CD4-positive, alpha-beta memory T cell (primary cell): ENCODE measurements at regions of chr4 and their contacts with region 1.

Region 1: DNA sequence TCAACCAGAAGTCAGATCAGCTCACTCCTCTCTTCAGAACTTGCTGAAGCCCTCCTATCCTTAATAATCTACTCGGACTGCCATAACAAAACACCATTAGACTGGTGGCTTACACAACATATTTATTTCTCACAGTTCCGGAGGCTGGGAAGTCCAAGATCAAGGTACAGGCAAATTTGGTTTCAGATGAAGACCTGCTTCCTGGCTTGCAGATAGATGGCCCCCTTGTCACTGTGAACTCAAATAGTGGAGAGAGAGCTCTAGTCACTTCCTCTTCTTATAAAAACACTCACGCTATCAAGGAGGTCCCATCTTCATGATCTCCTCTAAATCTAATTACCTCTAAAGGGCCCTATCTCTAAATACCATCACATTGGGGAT is 125.1 kb downstream of the CAMK2D start:
- DNase-seq: peak; percentile 35 to 48 (median 42)
- H3K4me3 ChIP-seq: no peak overlapping the region
- H3K4me3 Mint-ChIP-seq: peak overlapping the region in 7 of 8 donors; percentile 53 to 82 (median 61)
- H3K27ac ChIP-seq: peak overlapping the region; percentile 29
- H3K27ac Mint-ChIP-seq: peak overlapping the region; percentile 65 to 85 (median 83)
- H3K4me1 ChIP-seq: peaks cover 48% of the 10 kb centered on the region
- H3K4me1 Mint-ChIP-seq: peaks cover 42 to 61% (median 48%) of the 10 kb centered on the region in 4 donors
- H3K27me3 ChIP-seq: no peaks in the 10 kb centered on the region
- H3K27me3 Mint-ChIP-seq: no peaks in the 10 kb centered on the region

Region 2: GRCh38 chr4:113673450-113673849 is 37.0 kb after region 1 on chr4:
- CTCF ChIA-PET with region 1: interaction called, 7 read pairs
- POLR2A ChIA-PET with region 1: no interaction called
- intact Hi-C with region 1: loop called (anchors 5 kb)
- DNase-seq: peak in 1 of 5 donors; percentile 52
- H3K4me3 ChIP-seq: no peak overlapping the region
- H3K4me3 Mint-ChIP-seq: peak overlapping the region in 2 of 8 donors; percentile 10 to 28
- H3K27ac ChIP-seq: no peak overlapping the region
- H3K27ac Mint-ChIP-seq: peak overlapping the region in 2 of 7 donors; percentile 57 to 76
- H3K4me1 ChIP-seq: peaks cover 32% of the 10 kb centered on the region
- H3K4me1 Mint-ChIP-seq: peaks cover 31 to 54% (median 40%) of the 10 kb centered on the region in 4 donors
- H3K27me3 ChIP-seq: no peaks in the 10 kb centered on the region
- H3K27me3 Mint-ChIP-seq: no peaks in the 10 kb centered on the region

Region 3: GRCh38 chr4:113781439-113782040 is 145.1 kb after region 1 on chr4:
- CTCF ChIA-PET with region 1: no interaction called
- POLR2A ChIA-PET with region 1: no interaction called
- intact Hi-C with region 1: loop called (anchors 1 kb)
- DNase-seq: peak in 4 of 5 donors; percentile 25 to 35 (median 30)
- H3K4me3 ChIP-seq: no peak overlapping the region
- H3K4me3 Mint-ChIP-seq: no peak overlapping the region
- H3K27ac ChIP-seq: no peak overlapping the region
- H3K27ac Mint-ChIP-seq: no peak overlapping the region
- H3K4me1 ChIP-seq: no peaks in the 10 kb centered on the region
- H3K4me1 Mint-ChIP-seq: peaks cover 0 to 8% (median 2%) of the 10 kb centered on the region in 4 donors
- H3K27me3 ChIP-seq: no peaks in the 10 kb centered on the region
- H3K27me3 Mint-ChIP-seq: peaks cover 0 to 1% of the 10 kb centered on the region in 2 donors

Region 4: GRCh38 chr4:113908829-113909228 is 272.4 kb after region 1 on chr4:
- CTCF ChIA-PET with region 1: no interaction called
- POLR2A ChIA-PET with region 1: no interaction called
- intact Hi-C with region 1: loop called (anchors 1 kb)
- DNase-seq: peak; percentile 12 to 36 (median 24)
- H3K4me3 ChIP-seq: no peak overlapping the region
- H3K4me3 Mint-ChIP-seq: no peak overlapping the region
- H3K27ac ChIP-seq: no peak overlapping the region
- H3K27ac Mint-ChIP-seq: peak overlapping the region in 1 of 7 donors; percentile 14
- H3K4me1 ChIP-seq: peaks cover 28% of the 10 kb centered on the region
- H3K4me1 Mint-ChIP-seq: peaks cover 13 to 36% (median 21%) of the 10 kb centered on the region in 4 donors
- H3K27me3 ChIP-seq: no peaks in the 10 kb centered on the region
- H3K27me3 Mint-ChIP-seq: no peaks in the 10 kb centered on the region

Region 5: GRCh38 chr4:114072781-114073180 is 436.4 kb after region 1 on chr4:
- CTCF ChIA-PET with region 1: interaction called, 3 read pairs
- POLR2A ChIA-PET with region 1: no interaction called
- intact Hi-C with region 1: loop called (anchors 1 kb)
- DNase-seq: no peak
- H3K4me3 ChIP-seq: no peak overlapping the region
- H3K4me3 Mint-ChIP-seq: no peak overlapping the region
- H3K27ac ChIP-seq: no peak overlapping the region
- H3K27ac Mint-ChIP-seq: no peak overlapping the region
- H3K4me1 ChIP-seq: no peaks in the 10 kb centered on the region
- H3K4me1 Mint-ChIP-seq: peaks cover 0 to 5% (median 3%) of the 10 kb centered on the region in 4 donors
- H3K27me3 ChIP-seq: no peaks in the 10 kb centered on the region
- H3K27me3 Mint-ChIP-seq: peaks cover 0 to 1% of the 10 kb centered on the region in 2 donors

Region 6: DNA sequence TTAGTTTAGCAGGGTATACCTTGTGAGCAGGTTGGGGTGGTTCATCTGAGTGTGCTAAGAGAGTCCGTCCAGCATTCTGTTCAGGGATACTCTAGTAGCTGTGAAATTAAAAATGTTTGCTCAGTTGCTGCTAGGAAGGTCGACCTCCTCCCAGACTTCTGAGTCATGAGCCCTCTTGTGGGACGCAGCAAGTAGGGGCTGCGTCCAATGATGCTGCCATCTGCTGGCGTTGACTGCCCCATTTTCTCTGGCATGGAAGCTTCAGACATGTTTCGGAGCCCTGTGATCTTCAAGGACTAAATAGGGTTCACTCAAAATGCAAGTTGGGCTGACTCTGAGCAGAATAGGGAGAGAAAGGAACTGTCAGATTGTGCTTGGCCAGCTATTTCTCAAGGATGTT is 544.1 kb after region 1 on chr4:
- CTCF ChIA-PET with region 1: interaction called, 3 read pairs
- POLR2A ChIA-PET with region 1: no interaction called
- intact Hi-C with region 1: loop called (anchors 2 kb)
- DNase-seq: peak in 4 of 5 donors; percentile 2 to 16 (median 6)
- H3K4me3 ChIP-seq: no peak overlapping the region
- H3K4me3 Mint-ChIP-seq: no peak overlapping the region
- H3K27ac ChIP-seq: no peak overlapping the region
- H3K27ac Mint-ChIP-seq: no peak overlapping the region
- H3K4me1 ChIP-seq: no peaks in the 10 kb centered on the region
- H3K4me1 Mint-ChIP-seq: peaks cover 0 to 2% (median under 1%) of the 10 kb centered on the region in 4 donors
- H3K27me3 ChIP-seq: no peaks in the 10 kb centered on the region
- H3K27me3 Mint-ChIP-seq: no peaks in the 10 kb centered on the region

Region 7: GRCh38 chr4:114386637-114387233 is 750.3 kb after region 1 on chr4:
- CTCF ChIA-PET with region 1: no interaction called
- POLR2A ChIA-PET with region 1: no interaction called
- intact Hi-C with region 1: loop called (anchors 5 kb)
- DNase-seq: peak in 4 of 5 donors; percentile 4 to 16 (median 6)
- H3K4me3 ChIP-seq: no peak overlapping the region
- H3K4me3 Mint-ChIP-seq: no peak overlapping the region
- H3K27ac ChIP-seq: no peak overlapping the region
- H3K27ac Mint-ChIP-seq: no peak overlapping the region
- H3K4me1 ChIP-seq: no peaks in the 10 kb centered on the region
- H3K4me1 Mint-ChIP-seq: no peaks in the 10 kb centered on the region
- H3K27me3 ChIP-seq: no peaks in the 10 kb centered on the region
- H3K27me3 Mint-ChIP-seq: peaks cover 3 to 4% of the 10 kb centered on the region in 2 donors